OCI-LY7 (cell line): ENCODE measurements at regions of chr13 and their contacts with region 1.

Region 1: DNA sequence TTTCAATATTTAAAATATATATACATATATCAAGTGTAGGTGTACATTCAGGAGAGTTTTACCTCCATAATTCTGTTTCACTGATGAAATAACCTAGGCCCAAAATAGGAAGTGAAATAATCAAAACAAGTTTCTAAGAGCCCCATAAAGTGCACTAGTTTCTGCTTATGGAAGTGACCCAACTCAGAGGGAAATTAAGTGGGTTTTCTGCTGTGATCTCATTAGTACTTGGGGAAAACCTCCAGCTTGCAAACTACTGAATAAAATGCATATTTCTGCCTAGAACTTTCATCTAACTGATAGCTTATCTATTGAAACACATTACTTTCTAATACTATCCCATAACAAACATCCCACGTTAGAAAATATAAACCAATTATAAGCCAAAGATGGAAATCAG is 45.4 kb upstream of the MIR17HG start:
- DNase-seq: peak; percentile 69
- H3K4me3 ChIP-seq: no peak overlapping the region
- H3K27ac ChIP-seq: no peak overlapping the region
- H3K4me1 ChIP-seq: peaks cover 18% of the 10 kb centered on the region
- CTCF ChIP-seq: no peak

Region 2: GRCh38 chr13:91284335-91284734 is 17.8 kb before region 1 on chr13:
- CTCF ChIA-PET with region 1: interaction called, 3 read pairs
- POLR2A ChIA-PET with region 1: interaction called, 19 read pairs
- intact Hi-C with region 1: no loop called
- DNase-seq: no peak
- H3K4me3 ChIP-seq: no peak overlapping the region
- H3K27ac ChIP-seq: no peak overlapping the region
- H3K4me1 ChIP-seq: no peaks in the 10 kb centered on the region
- CTCF ChIP-seq: no peak

Region 3: DNA sequence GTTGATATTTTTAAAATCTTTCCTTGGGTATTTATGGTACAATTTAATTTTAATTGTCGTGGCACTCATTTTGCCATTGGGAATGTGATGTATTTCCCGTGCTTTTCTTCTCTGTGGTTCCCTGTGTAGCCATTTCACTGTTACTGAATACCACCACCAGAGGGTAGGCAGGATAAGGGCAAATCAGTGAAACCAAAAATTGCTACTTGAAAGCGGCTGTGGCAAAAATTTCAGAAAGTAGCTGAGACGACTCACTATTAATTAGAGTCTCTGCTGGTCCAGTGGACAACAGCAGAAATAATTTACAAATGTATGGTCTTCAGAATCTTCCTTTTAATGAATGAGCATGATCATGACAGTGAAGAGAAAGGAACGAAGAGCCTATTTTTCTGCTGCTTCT is 11.0 kb after region 1 on chr13:
- CTCF ChIA-PET with region 1: interaction called, 4 read pairs
- POLR2A ChIA-PET with region 1: interaction called, 96 read pairs
- intact Hi-C with region 1: no loop called
- DNase-seq: peak; percentile 71
- H3K4me3 ChIP-seq: no peak overlapping the region
- H3K27ac ChIP-seq: no peak overlapping the region
- H3K4me1 ChIP-seq: peaks cover 5% of the 10 kb centered on the region
- CTCF ChIP-seq: no peak

Region 4: DNA sequence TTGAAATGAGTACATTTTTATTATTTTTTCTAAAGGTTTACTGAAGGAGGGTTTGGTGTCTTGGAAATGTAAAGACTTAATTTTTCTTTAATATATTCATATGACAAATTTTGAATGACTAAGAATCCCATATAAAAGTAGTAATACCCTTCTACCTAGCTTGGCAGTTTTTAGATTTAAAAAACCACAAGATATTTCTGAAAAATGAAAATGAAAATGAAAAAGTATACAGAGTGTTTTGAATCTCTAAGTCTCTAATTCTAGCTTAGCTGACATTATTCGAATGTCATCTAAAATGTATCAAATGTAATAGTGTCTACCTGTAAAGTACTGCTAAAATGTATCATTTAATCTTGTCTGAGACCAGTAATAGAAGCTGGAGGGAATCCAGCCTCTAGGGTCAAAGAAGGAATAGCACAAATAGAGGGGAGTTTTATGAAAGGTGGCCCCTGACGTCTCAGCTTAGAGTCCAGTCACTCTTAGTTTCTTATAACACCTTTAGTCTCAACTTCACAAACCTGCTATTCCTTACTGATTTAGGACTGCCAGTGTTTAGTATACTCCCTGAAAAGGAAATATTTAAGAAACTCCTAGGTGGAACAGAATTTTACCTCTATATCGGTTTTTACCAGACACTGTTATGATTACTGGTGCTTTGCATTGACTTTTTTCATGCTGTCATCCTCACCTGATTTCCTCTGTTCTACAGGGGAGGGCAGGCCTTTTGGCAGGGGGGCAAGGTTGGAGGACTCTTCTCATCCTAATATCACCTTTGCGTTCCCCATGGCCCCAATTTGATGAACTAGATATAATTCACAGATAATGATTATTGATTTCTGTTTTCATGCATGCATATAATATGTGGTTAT is 29.2 kb after region 1 on chr13:
- CTCF ChIA-PET with region 1: no interaction called
- POLR2A ChIA-PET with region 1: interaction called, 57 read pairs
- intact Hi-C with region 1: no loop called
- DNase-seq: no peak
- H3K4me3 ChIP-seq: no peak overlapping the region
- H3K27ac ChIP-seq: no peak overlapping the region
- H3K4me1 ChIP-seq: no peaks in the 10 kb centered on the region
- CTCF ChIP-seq: no peak

Region 5: GRCh38 chr13:91358387-91358782 is 56.3 kb after region 1 on chr13:
- CTCF ChIA-PET with region 1: no interaction called
- POLR2A ChIA-PET with region 1: interaction called, 27 read pairs
- intact Hi-C with region 1: no loop called
- DNase-seq: peak; percentile 86
- H3K4me3 ChIP-seq: no peak overlapping the region
- H3K27ac ChIP-seq: peak overlapping the region; percentile 26
- H3K4me1 ChIP-seq: peaks cover 50% of the 10 kb centered on the region
- CTCF ChIP-seq: no peak